Dendritic cell treated with granulocyte-macrophage colony-stimulating factor and Interleukin-4, amounts not matched to agents 40 ng/mL and 50 ng/mL, for 4 days (primary cell): ENCODE measurements at regions of chr10 and their contacts with region 1.

Region 1: GRCh38 chr10:120423431-120424197 is 33.4 kb upstream of the PLPP4 start:
- H3K4me3 Mint-ChIP-seq: no peak overlapping the region
- H3K27ac Mint-ChIP-seq: no peak overlapping the region
- H3K4me1 Mint-ChIP-seq: peaks cover 5% of the 10 kb centered on the region
- H3K27me3 Mint-ChIP-seq: peaks cover 3% of the 10 kb centered on the region

Region 2: DNA sequence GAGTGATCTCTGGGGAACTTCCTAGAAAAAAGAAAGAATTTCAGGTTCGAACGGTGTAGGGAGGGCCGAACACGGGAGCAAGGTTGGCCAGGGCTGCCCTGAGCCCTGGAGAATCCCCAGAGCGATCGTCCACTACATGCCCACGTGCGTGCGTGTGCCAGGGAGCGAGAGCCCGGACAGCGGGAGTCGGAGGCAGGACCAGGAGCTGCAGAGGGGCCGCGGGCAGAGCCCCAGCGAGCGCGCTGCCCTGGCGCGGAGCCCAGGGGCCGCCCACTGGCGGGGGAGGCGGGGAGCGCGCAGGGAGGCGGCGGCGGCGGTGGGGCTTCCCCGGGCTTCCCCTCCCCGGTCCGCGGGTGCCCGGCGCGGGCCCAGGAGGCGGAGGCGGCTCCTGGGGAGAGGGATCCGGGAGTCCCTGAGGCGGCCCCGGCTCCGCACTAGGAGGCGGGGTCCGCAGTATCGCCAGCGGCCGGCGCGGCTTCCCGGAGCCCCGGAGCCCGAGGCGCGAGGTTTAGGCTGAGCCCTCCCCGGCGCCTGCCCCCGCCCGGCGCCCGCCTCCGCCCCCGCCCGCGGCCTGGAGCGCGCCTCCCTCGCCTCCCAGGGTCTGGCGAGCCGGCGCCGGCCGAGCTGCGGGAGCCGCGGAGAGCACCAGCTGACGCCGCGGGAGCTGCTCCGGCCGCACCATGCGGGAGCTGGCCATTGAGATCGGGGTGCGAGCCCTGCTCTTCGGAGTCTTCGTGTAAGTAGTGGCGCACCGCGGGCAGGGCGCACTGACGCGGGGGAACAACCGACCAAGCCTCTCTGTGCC is 33.2 kb after region 1 on chr10 and contains the start of gene PLPP4:
- intact Hi-C with region 1: no loop called
- H3K4me3 Mint-ChIP-seq: peak within 1 kb of the TSS; percentile 60
- H3K27ac Mint-ChIP-seq: no peak within 1 kb of the TSS
- H3K4me1 Mint-ChIP-seq: peaks cover 6% of the 10 kb centered on the region
- H3K27me3 Mint-ChIP-seq: peaks cover 56% of the 10 kb centered on the region

Region 3: DNA sequence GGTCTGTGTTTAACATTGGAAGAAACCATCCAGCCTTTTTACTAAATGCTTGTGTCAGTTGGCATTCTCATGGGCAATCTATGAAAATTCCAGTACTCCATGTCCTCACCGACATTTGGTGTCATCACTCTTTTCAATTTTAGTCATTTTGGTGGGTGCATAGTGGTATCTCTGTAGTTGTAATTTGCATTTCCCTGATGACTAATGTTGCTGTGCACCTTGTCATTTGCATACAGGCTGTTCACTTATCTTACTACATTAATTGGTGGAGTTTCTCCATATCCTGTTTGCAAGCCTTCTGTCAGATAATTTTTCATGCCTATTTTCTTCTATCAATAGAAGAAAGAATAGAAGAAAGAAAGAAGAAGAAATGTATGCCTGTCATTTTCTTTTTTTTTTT is 107.1 kb after region 1 on chr10:
- intact Hi-C with region 1: no loop called
- H3K4me3 Mint-ChIP-seq: no peak overlapping the region
- H3K27ac Mint-ChIP-seq: no peak overlapping the region
- H3K4me1 Mint-ChIP-seq: no peaks in the 10 kb centered on the region
- H3K27me3 Mint-ChIP-seq: peaks cover 3% of the 10 kb centered on the region

Region 4: GRCh38 chr10:120735773-120736371 is 312.3 kb after region 1 on chr10:
- intact Hi-C with region 1: loop called (anchors 1 kb)
- H3K4me3 Mint-ChIP-seq: no peak overlapping the region
- H3K27ac Mint-ChIP-seq: no peak overlapping the region
- H3K4me1 Mint-ChIP-seq: peaks cover 11% of the 10 kb centered on the region
- H3K27me3 Mint-ChIP-seq: peaks cover 5% of the 10 kb centered on the region

Region 5: GRCh38 chr10:120861178-120861855 is 437.7 kb after region 1 on chr10:
- intact Hi-C with region 1: loop called (anchors 10 kb)
- H3K4me3 Mint-ChIP-seq: no peak overlapping the region
- H3K27ac Mint-ChIP-seq: no peak overlapping the region
- H3K4me1 Mint-ChIP-seq: peaks cover 7% of the 10 kb centered on the region
- H3K27me3 Mint-ChIP-seq: no peaks in the 10 kb centered on the region